PC-3 (cell line): ENCODE measurements at regions of chr15 and their contacts with region 1.

Region 1: GRCh38 chr15:95604634-95605036 is 725.9 kb upstream of the NR2F2 start:
- DNase-seq: peak; percentile 86
- ATAC-seq: peak; percentile 54
- H3K4me3 ChIP-seq: no peak overlapping the region
- H3K27ac ChIP-seq: peak overlapping the region; percentile 66
- H3K4me1 ChIP-seq: peaks cover 18% of the 10 kb centered on the region
- H3K27me3 ChIP-seq: no peaks in the 10 kb centered on the region
- CTCF ChIP-seq: no peak

Region 2: GRCh38 chr15:95712785-95713184 is 108.2 kb after region 1 on chr15:
- CTCF ChIA-PET with region 1: no interaction called
- POLR2A ChIA-PET with region 1: no interaction called
- intact Hi-C with region 1: loop called (anchors 2 kb)
- DNase-seq: peak; percentile 86
- ATAC-seq: peak; percentile 93
- H3K4me3 ChIP-seq: no peak overlapping the region
- H3K27ac ChIP-seq: peak overlapping the region; percentile 95
- H3K4me1 ChIP-seq: peaks cover 22% of the 10 kb centered on the region
- H3K27me3 ChIP-seq: no peaks in the 10 kb centered on the region
- CTCF ChIP-seq: no peak

Region 3: DNA sequence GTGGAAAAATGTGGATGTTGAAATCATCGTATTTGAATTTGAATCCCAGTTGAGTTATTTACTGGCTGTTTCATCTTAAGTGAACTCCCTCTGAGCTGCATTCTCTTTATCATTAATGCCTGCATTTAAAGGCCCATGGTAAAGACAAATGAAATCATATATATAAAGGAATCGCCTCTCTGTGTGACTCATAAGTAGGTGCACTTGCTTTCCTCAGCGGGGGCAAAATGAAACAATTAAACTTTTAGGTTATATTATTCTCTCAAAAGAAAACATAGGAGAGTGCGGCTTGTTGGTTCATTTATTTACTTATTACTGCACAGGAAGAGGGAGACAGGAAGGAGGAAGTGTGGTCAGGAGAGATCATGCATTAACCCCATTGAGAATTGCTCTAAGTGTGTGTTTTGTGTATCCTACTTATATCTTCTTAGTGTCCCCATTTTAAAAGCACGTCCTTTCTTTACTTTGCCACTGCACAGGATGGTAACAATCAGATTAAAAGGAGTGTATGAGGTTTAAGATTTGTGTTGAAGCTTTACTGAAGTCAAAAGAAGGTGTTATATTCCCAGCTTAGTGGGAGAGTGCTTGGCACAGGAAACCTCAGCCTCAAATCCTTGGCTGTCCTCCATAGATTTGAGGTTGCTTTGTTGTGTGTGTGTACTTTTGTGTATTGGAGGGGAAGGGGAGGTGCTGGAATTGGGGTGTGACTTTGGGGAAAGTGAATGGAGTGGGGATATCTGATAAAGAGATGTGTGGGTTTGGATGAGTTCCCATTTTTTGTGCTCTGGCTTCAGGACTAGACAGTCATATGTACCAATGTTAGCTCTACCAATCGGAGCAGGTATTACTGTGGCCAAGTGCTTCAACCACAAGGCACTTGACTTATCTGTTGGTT is 130.0 kb after region 1 on chr15:
- CTCF ChIA-PET with region 1: no interaction called
- POLR2A ChIA-PET with region 1: no interaction called
- intact Hi-C with region 1: loop called (anchors 1 kb)
- DNase-seq: peak; percentile 80
- ATAC-seq: peak; percentile 87
- H3K4me3 ChIP-seq: peak overlapping the region; percentile 15; the same call in 1 of the 2 replicates
- H3K27ac ChIP-seq: peak overlapping the region; percentile 96
- H3K4me1 ChIP-seq: peaks cover 24% of the 10 kb centered on the region
- H3K27me3 ChIP-seq: no peaks in the 10 kb centered on the region
- CTCF ChIP-seq: no peak

Region 4: DNA sequence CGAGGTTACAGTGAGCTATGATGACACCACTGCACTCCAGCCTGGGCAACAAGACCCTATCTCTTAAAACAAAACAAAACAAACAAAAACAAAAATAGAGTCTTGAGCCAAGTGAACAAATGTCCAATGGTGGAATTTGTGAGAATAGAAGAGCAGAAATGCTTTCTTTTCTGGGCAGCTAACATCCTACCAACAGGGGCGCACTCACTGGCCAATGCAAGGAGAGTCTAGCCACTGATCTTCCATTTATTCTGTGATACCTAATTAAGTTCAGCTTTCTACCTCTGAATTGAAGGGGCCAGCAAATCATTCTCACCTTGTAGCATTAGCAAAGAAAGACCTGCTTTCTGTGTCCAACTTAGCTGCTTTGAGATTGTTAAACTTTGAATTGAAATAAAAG is 424.0 kb after region 1 on chr15:
- CTCF ChIA-PET with region 1: no interaction called
- POLR2A ChIA-PET with region 1: no interaction called
- intact Hi-C with region 1: loop called (anchors 5 kb)
- DNase-seq: no peak
- ATAC-seq: no peak
- H3K4me3 ChIP-seq: no peak overlapping the region
- H3K27ac ChIP-seq: no peak overlapping the region
- H3K4me1 ChIP-seq: peaks cover 11% of the 10 kb centered on the region
- H3K27me3 ChIP-seq: no peaks in the 10 kb centered on the region
- CTCF ChIP-seq: 0 out of 2 replicates have a peak, but pooled peaks have one; percentile 18